Esophagus muscularis mucosa (tissue), 4 donors: ENCODE measurements at regions of chr20 and their contacts with region 1.

Region 1: DNA sequence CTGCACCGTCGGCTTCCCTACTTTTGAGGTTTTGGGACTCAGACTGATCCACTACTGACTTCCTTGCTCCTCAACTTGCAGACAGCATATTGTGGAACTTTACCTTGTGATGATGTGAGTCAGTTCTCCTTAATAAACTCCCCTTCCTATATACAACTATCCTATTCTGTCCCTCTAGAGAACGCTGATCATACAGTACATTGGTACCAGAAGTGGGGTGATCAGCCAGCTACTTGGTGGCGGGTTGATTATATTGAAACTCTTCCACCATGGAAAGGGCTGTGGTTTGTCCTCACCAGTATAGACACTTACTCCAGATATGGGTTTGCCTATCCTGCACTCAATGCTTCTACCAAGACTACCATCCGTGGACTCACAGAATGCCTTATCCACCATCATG is 7.6 kb upstream of the TAF4 start:
- DNase-seq: no peak
- H3K4me3 ChIP-seq: no peak overlapping the region
- H3K27ac ChIP-seq: no peak overlapping the region
- H3K4me1 ChIP-seq: no peaks in the 10 kb centered on the region
- H3K27me3 ChIP-seq: peaks cover 0 to under 1% (median 0%) of the 10 kb centered on the region in 4 donors
- CTCF ChIP-seq: no peak
- EP300 ChIP-seq: no peak
- POLR2A ChIP-seq: no peak

Region 2: DNA sequence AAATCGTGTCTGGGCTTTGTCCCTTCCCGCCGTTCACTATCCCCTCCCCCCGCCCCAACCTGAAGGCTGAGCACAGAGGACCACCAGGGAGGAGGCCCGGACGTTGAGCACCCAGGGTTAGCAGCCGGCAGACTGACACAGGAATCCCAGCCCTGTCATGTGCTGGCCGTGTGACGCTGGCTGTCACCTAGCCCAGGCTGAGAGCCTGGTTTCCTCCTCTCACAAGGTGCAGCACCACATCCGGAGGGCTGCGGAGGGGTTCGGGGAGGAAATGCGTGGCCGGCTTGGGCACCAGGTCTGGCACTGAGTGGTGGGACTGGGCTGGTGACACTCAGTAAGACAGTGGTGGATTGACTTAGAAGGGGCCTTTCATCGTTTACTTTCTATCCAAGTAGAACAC is 44.3 kb after region 1 on chr20:
- intact Hi-C with region 1: loop called (anchors 2 kb)
- DNase-seq: no peak
- H3K4me3 ChIP-seq: no peak overlapping the region
- H3K27ac ChIP-seq: no peak overlapping the region
- H3K4me1 ChIP-seq: peaks cover 8 to 35% (median 12%) of the 10 kb centered on the region in 4 donors
- H3K27me3 ChIP-seq: peaks cover 0 to 64% (median 2%) of the 10 kb centered on the region in 4 donors
- CTCF ChIP-seq: no peak
- EP300 ChIP-seq: no peak
- POLR2A ChIP-seq: no peak

Region 3: GRCh38 chr20:62368976-62369814 is 295.9 kb after region 1 on chr20:
- intact Hi-C with region 1: no loop called
- DNase-seq: no peak
- H3K4me3 ChIP-seq: peak overlapping the region; percentile 72 to 96 (median 88)
- H3K27ac ChIP-seq: peak overlapping the region; percentile 93 to 97 (median 94)
- H3K4me1 ChIP-seq: peaks cover 65 to 92% (median 90%) of the 10 kb centered on the region in 4 donors
- H3K27me3 ChIP-seq: no peaks in the 10 kb centered on the region
- CTCF ChIP-seq: peak; percentile 13 to 51 (median 19)
- EP300 ChIP-seq: no peak
- POLR2A ChIP-seq: no peak